PC-3 (cell line): ENCODE measurements at regions of chr18 and their contacts with region 1.

Region 1: DNA sequence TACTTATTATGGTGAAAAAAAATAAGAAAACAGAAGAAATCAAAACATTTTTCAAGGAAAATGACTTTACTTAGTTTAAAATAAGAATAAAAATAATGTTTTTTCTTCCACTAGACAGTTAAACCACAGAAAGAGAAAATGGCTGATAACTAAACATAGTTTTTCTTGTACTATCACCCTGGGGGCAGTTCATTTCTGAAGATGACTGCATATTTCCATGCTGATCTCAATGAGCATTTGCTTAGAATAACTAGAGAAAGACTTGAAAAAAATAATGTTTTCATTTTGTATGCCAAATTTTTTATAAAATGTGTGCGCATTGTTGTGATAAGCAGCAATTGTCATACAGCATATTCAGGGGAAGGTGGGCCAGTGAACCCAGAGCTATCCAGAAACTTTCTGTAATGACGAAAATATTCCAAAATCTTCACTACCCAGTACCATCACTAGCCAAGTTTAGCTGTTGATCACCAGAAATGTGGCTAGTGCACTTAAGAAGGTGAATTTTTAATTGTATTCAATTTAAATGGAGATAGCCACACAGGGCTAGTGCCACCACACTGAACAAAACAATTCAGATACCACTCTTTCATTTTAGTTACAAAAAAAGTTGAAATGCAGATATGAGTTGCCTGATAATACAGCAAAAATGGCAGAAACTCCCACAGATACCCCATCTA is 513.4 kb upstream of the NETO1 start:
- DNase-seq: peak; percentile 38
- ATAC-seq: peak; percentile 61
- H3K4me3 ChIP-seq: no peak overlapping the region
- H3K27ac ChIP-seq: peak overlapping the region; percentile 87
- H3K4me1 ChIP-seq: peaks cover 23% of the 10 kb centered on the region
- H3K27me3 ChIP-seq: no peaks in the 10 kb centered on the region
- CTCF ChIP-seq: no peak

Region 2: GRCh38 chr18:73352546-73352945 is 28.6 kb before region 1 on chr18:
- CTCF ChIA-PET with region 1: no interaction called
- POLR2A ChIA-PET with region 1: no interaction called
- intact Hi-C with region 1: no loop called
- DNase-seq: no peak
- ATAC-seq: peak; percentile 9; the same call in 1 of the 2 replicates
- H3K4me3 ChIP-seq: no peak overlapping the region
- H3K27ac ChIP-seq: no peak overlapping the region
- H3K4me1 ChIP-seq: 0 out of 2 replicates have a peak, but pooled peaks cover 5% of the 10 kb centered on the region
- H3K27me3 ChIP-seq: no peaks in the 10 kb centered on the region
- CTCF ChIP-seq: no peak

Region 3: GRCh38 chr18:73365018-73365417 is 16.1 kb before region 1 on chr18:
- CTCF ChIA-PET with region 1: no interaction called
- POLR2A ChIA-PET with region 1: interaction called, 11 read pairs
- intact Hi-C with region 1: no loop called
- DNase-seq: peak; percentile 4
- ATAC-seq: no peak
- H3K4me3 ChIP-seq: no peak overlapping the region
- H3K27ac ChIP-seq: no peak overlapping the region
- H3K4me1 ChIP-seq: no peaks in the 10 kb centered on the region
- H3K27me3 ChIP-seq: no peaks in the 10 kb centered on the region
- CTCF ChIP-seq: no peak

Region 4: DNA sequence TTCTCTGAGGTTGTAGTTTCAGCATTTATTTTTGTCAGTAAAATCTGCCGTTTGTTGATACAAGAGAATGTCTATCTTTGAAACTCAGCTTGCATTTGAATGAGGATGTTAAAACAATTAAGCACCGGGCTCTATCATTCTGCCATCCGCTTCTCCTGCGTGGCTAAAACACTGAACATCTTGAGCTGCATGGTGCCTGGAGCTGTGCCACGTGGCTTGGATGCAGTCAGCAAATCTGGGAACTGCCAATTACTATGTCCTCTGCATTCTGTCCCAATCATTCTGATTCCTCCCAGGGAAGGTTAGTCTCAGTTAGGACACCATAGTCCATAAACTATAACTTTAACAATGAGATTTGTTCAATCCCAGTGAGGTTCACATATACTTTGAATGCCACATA is 168.1 kb after region 1 on chr18:
- CTCF ChIA-PET with region 1: no interaction called
- POLR2A ChIA-PET with region 1: no interaction called
- intact Hi-C with region 1: loop called (anchors 1 kb)
- DNase-seq: no peak
- ATAC-seq: no peak
- H3K4me3 ChIP-seq: no peak overlapping the region
- H3K27ac ChIP-seq: no peak overlapping the region
- H3K4me1 ChIP-seq: peaks cover 11% of the 10 kb centered on the region
- H3K27me3 ChIP-seq: no peaks in the 10 kb centered on the region
- CTCF ChIP-seq: no peak

Region 5: DNA sequence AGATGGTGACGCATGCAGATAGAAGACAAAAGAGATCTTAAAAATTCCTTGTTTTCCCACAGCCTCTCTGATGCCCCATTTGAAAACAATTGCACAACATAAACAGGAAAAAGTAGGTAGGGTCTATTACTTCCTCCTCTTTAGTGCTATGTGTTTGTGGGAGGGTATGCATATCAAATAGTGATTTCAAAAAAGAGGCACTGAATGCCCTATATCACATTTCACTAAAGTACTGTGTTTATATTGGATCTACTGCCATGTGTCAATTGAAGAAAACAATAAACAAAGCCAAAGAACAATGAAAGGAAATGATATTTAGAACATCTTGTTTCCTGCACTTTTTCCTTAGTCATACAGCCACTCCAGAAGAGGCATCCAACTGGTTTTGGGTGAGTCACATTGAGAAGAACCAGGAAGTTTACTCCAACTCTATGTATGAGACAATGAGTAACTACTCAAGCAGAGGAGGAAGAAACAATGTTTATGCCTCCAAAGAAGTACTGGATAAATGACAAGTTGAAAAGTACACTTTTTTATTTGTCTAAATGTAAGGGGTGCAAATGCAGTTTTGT is 182.8 kb after region 1 on chr18:
- CTCF ChIA-PET with region 1: no interaction called
- POLR2A ChIA-PET with region 1: no interaction called
- intact Hi-C with region 1: loop called (anchors 5 kb)
- DNase-seq: peak; percentile 95
- ATAC-seq: peak; percentile 96
- H3K4me3 ChIP-seq: no peak overlapping the region
- H3K27ac ChIP-seq: peak overlapping the region; percentile 84
- H3K4me1 ChIP-seq: peaks cover 19% of the 10 kb centered on the region
- H3K27me3 ChIP-seq: no peaks in the 10 kb centered on the region
- CTCF ChIP-seq: no peak

Region 6: GRCh38 chr18:73646772-73647171 is 265.6 kb after region 1 on chr18:
- CTCF ChIA-PET with region 1: no interaction called
- POLR2A ChIA-PET with region 1: no interaction called
- intact Hi-C with region 1: loop called (anchors 5 kb)
- DNase-seq: peak; percentile 85
- ATAC-seq: peak; percentile 79
- H3K4me3 ChIP-seq: no peak overlapping the region
- H3K27ac ChIP-seq: peak overlapping the region; percentile 82
- H3K4me1 ChIP-seq: peaks cover 31% of the 10 kb centered on the region
- H3K27me3 ChIP-seq: no peaks in the 10 kb centered on the region
- CTCF ChIP-seq: no peak

Region 7: GRCh38 chr18:73688847-73689711 is 307.9 kb after region 1 on chr18:
- CTCF ChIA-PET with region 1: no interaction called
- POLR2A ChIA-PET with region 1: no interaction called
- intact Hi-C with region 1: loop called (anchors 10 kb)
- DNase-seq: peak; percentile 87
- ATAC-seq: peak; percentile 41
- H3K4me3 ChIP-seq: no peak overlapping the region
- H3K27ac ChIP-seq: peak overlapping the region; percentile 93
- H3K4me1 ChIP-seq: peaks cover 49% of the 10 kb centered on the region
- H3K27me3 ChIP-seq: no peaks in the 10 kb centered on the region
- CTCF ChIP-seq: no peak

Region 8: GRCh38 chr18:73842795-73843394 is 461.7 kb after region 1 on chr18:
- CTCF ChIA-PET with region 1: no interaction called
- POLR2A ChIA-PET with region 1: no interaction called
- intact Hi-C with region 1: loop called (anchors 5 kb)
- DNase-seq: peak; percentile 71
- ATAC-seq: peak; percentile 64
- H3K4me3 ChIP-seq: peak overlapping the region; percentile 55; the same call in 1 of the 2 replicates
- H3K27ac ChIP-seq: no peak overlapping the region
- H3K4me1 ChIP-seq: peaks cover 9% of the 10 kb centered on the region
- H3K27me3 ChIP-seq: no peaks in the 10 kb centered on the region
- CTCF ChIP-seq: peak; percentile 90